Spleen (tissue), 13 donors: ENCODE measurements at regions of chr5 and their contacts with region 1.

Region 1: DNA sequence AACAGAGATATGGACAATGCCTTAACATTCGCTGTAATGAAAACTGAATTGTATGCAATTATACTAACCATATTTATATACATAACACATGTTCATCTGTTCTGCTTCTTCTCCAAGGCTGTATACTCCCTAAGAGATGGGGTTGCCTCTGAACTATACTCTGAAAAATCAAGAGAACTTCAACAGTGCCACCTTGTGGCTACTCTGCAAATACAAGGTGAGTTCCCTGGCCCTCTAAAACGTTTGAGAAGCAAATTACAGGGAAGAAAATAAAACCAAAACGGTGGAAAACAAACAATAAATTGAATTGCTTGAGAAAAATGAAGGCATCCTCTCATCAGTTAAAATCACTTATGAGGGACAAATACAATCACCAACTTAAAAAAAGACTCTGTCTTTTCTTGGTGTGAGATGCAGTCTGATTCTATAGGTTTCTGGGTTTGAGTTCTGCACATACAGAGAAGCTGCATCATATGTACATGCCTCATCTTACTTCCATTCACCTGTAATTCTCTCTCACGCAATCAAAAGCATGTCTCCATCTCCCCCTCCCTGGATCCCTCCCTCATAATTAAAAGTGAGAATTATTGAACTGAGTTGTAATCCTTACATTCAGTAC is 98.6 kb downstream of the FBXW11 start:
- DNase-seq: no peak
- H3K4me3 ChIP-seq: no peak overlapping the region
- H3K27ac ChIP-seq: no peak overlapping the region
- H3K4me1 ChIP-seq: peaks cover 7 to 64% (median 29%) of the 10 kb centered on the region in 6 donors
- H3K27me3 ChIP-seq: no peaks in the 10 kb centered on the region
- CTCF ChIP-seq: peak; percentile 59 to 88 (median 75)
- POLR2A ChIP-seq: no peak

Region 2: DNA sequence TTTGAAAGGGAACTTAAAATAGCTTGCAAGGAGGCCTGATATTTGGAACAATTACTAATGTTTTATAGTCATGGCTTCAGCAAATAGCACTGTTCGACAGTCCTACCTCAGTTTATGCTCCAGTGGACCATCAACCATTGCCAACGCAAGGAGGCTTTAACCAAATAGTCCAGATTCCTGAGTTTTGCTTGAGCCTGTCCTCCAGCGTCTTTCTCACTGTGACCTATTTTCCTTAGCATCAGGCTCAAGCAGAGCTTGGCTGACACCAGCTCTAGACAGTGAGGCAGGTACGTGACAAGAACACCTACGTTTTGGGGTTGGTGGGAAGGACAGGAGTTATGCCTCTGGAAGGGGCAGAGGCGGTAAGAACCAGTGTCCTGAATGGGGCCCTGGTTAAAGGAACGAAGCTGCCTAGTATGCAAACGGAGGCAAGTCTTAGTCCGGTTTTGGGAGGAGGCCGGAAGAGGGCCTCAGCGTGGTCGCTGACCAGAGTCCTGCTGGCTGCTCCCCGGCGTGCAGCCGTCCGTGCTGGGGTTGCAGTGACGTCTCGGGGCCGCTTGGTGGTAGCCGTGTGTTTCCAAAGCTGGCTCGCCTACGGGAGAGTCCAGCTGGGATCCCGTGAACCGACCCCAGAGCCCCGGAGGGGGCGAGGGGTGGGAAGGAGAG is 489.4 kb before region 1 on chr5:
- intact Hi-C with region 1: loop called (anchors 5 kb)
- DNase-seq: peak; percentile 88
- H3K4me3 ChIP-seq: peak overlapping the region in 7 of 8 donors; percentile 38 to 74 (median 46)
- H3K27ac ChIP-seq: no peak overlapping the region
- H3K4me1 ChIP-seq: peaks cover 16 to 35% (median 32%) of the 10 kb centered on the region in 6 donors
- H3K27me3 ChIP-seq: peaks cover 0 to 48% (median 33%) of the 10 kb centered on the region in 7 donors
- CTCF ChIP-seq: peak; percentile 60 to 94 (median 85)
- POLR2A ChIP-seq: no peak

Region 3: GRCh38 chr5:171629221-171630026 is 278.4 kb before region 1 on chr5:
- intact Hi-C with region 1: loop called (anchors 10 kb)
- DNase-seq: no peak
- H3K4me3 ChIP-seq: peak overlapping the region in 1 of 8 donors; percentile 11
- H3K27ac ChIP-seq: no peak overlapping the region
- H3K4me1 ChIP-seq: peaks cover 0 to 36% (median 21%) of the 10 kb centered on the region in 6 donors
- H3K27me3 ChIP-seq: peaks cover 0 to 48% (median 7%) of the 10 kb centered on the region in 7 donors
- CTCF ChIP-seq: no peak
- POLR2A ChIP-seq: no peak

Region 4: GRCh38 chr5:171667341-171668096 is 240.3 kb before region 1 on chr5:
- intact Hi-C with region 1: no loop called
- DNase-seq: no peak
- H3K4me3 ChIP-seq: no peak overlapping the region
- H3K27ac ChIP-seq: no peak overlapping the region
- H3K4me1 ChIP-seq: no peaks in the 10 kb centered on the region
- H3K27me3 ChIP-seq: peaks cover 0 to 14% (median 0%) of the 10 kb centered on the region in 7 donors
- CTCF ChIP-seq: no peak
- POLR2A ChIP-seq: no peak

Region 5: DNA sequence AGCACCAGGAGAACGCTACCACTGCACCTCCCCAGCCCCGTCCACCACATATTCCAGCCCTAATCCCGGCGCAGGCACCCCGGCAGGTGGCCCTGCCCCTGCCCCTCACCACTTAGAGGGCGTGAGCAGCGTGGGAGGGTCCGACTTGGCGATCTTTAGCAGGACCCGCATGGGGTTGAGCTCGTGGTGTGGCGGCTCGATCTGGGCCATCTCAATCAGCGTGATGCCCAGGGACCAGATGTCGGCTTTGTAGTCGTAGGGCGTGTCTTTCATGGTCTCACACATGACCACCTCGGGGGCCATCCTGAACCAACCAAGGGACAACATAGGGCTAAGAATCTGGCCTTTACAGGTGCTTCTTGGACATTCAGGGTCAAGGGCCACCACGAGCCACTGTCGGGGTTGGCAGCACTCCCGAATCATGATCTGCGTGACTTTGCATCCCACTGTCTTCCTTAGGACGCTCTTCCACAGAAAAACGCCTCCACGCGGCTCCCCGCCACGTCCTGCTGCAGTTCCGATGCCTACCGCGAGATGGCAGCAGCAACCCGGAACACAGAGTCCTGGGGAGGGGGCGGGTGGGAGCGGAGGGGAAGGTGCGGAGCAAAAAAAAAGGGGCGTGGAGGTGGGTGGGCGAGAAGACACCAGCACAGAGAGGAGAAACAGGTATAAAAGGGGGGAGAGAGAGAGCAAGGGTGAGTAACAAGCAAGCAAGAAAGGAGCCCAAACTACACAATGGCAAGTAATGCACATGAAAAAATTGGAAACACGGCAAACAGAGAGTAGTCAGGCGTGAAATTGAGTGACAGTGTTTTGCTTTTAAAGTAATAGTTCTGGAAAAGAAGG is 198.9 kb after region 1 on chr5:
- intact Hi-C with region 1: no loop called
- DNase-seq: peak; percentile 89
- H3K4me3 ChIP-seq: peak overlapping the region in 1 of 8 donors; percentile 46
- H3K27ac ChIP-seq: peak overlapping the region in 4 of 8 donors; percentile 37 to 93 (median 86)
- H3K4me1 ChIP-seq: peaks cover 31 to 97% (median 55%) of the 10 kb centered on the region in 6 donors
- H3K27me3 ChIP-seq: no peaks in the 10 kb centered on the region
- CTCF ChIP-seq: peak; percentile 88 to 98 (median 94)
- POLR2A ChIP-seq: no peak

Region 6: DNA sequence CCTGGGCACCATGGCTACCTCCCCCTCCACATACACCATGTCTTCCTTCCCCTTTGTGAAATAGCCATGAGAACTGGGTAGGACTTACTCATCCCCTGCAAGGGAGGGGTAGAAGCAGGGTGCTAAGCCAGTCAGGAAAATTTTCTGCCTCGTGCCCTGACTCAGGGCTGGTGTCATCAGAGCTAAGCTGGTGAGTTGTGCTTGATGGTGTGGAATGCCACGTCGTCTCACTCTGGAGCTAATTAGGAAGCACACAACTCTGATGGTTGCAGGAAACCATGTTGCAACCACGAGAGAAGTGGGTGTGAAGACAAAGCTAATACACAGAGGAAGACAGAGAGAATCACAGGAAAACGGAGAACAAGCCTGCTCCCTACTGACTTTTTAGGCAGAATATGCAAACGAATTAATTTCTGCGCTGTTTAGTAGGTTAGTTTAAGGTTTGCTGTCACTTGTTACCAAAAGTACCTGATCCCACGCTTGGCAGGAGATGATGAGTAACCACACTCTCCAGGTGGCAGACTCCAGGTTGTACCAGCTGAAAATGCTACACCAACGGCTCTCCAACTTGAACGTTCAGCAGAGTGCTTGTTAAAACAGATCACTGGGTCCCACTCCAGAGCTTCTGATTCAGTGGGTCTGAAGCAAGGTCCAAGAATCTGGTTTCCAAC is 225.7 kb after region 1 on chr5:
- intact Hi-C with region 1: no loop called
- DNase-seq: peak; percentile 84
- H3K4me3 ChIP-seq: peak overlapping the region in 1 of 8 donors; percentile 58
- H3K27ac ChIP-seq: peak overlapping the region in 7 of 8 donors; percentile 74 to 92 (median 84)
- H3K4me1 ChIP-seq: peaks cover 4 to 92% (median 52%) of the 10 kb centered on the region in 6 donors
- H3K27me3 ChIP-seq: no peaks in the 10 kb centered on the region
- CTCF ChIP-seq: no peak
- POLR2A ChIP-seq: no peak